Cardiac septum (tissue), 1 donor: ENCODE measurements at regions of chr6 and their contacts with region 1.

Region 1: GRCh38 chr6:31128093-31128676 is 7.9 kb upstream of the CDSN start:
- DNase-seq: no peak

Region 2: GRCh38 chr6:31094389-31094881 is 33.8 kb before region 1 on chr6:
- intact Hi-C with region 1: loop called (anchors 5 kb)
- DNase-seq: no peak